Colonic mucosa (tissue), 4 donors: ENCODE measurements at regions of chr1 and their contacts with region 1.

Region 1: GRCh38 chr1:147273409-147274336 is 31.2 kb downstream of the CHD1L start:
- DNase-seq: peak; percentile 26
- H3K4me3 ChIP-seq: no peak overlapping the region
- H3K27ac ChIP-seq: no peak overlapping the region
- H3K4me1 ChIP-seq: no peaks in the 10 kb centered on the region
- H3K27me3 ChIP-seq: no peaks in the 10 kb centered on the region
- CTCF ChIP-seq: peak; percentile 44

Region 2: DNA sequence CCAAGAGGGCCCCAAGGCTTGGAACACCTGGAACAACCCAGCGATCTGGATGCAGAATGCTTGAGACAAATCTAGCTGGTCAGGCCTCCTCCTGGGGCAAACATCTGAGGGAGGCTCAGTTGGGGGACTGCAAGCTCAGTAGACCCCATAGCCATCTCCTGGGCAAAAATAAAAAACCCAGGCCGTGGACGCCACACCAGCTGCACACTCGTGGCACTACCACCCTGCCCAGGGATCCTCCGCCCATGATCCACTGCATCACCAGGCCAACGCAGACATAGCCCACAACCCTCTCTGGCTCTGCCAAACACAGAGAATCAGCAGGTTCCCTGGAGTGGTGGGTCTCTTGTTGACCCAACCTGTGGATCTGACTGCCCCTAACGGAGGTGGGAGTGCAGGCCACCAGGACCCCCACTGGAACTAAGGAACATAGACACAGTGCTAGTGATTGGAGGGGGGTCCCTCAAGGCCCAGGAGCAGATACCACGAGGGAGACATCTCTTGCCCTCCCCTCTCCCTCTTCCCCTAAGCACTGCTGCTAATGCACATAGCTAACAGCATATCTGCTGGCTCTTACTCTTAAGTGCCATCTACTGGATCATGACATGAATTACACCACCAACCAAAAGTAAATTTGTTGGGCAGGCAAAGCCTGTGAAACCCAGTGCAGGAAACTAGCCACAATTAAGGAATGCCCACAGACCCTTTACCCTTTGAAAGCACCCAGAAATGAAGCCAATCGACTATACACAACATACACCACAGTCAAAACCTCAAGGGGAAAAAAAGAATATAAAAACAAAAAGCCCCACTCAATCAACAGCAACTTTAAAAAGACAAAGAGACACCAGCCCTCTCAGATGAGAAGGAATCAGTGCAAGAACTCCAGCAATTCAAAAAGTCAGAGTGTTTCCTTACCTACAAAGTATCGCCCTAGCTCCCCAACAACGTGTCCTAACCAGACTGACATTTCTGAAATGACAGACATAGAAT is 116.2 kb after region 1 on chr1:
- intact Hi-C with region 1: loop called (anchors 5 kb)
- DNase-seq: no peak
- H3K4me3 ChIP-seq: no peak overlapping the region
- H3K27ac ChIP-seq: no peak overlapping the region
- H3K4me1 ChIP-seq: no peaks in the 10 kb centered on the region
- H3K27me3 ChIP-seq: no peaks in the 10 kb centered on the region
- CTCF ChIP-seq: peak; percentile 54

Region 3: GRCh38 chr1:147494998-147495580 is 221.4 kb after region 1 on chr1:
- intact Hi-C with region 1: loop called (anchors 10 kb)
- DNase-seq: peak; percentile 74
- H3K4me3 ChIP-seq: no peak overlapping the region
- H3K27ac ChIP-seq: no peak overlapping the region
- H3K4me1 ChIP-seq: no peaks in the 10 kb centered on the region
- H3K27me3 ChIP-seq: no peaks in the 10 kb centered on the region
- CTCF ChIP-seq: peak; percentile 91